H1 (cell line): ENCODE measurements at regions of chr1 and their contacts with region 1.

Region 1: GRCh38 chr1:1337793-1338147 is 6.7 kb downstream of the TAS1R3 start:
- DNase-seq: peak in 1 of 2 experiments; percentile 87
- H3K4me3 ChIP-seq: no peak overlapping the region
- H3K27ac ChIP-seq: no peak overlapping the region
- H3K4me1 ChIP-seq: no peaks in the 10 kb centered on the region; a peak in 1 of 7 replicates
- H3K27me3 ChIP-seq: no peaks in the 10 kb centered on the region; a peak in 1 of 7 replicates
- CTCF ChIP-seq: no peak
- EP300 ChIP-seq: no peak
- POLR2A ChIP-seq: no peak
- RAD21 ChIP-seq: no peak

Region 2: DNA sequence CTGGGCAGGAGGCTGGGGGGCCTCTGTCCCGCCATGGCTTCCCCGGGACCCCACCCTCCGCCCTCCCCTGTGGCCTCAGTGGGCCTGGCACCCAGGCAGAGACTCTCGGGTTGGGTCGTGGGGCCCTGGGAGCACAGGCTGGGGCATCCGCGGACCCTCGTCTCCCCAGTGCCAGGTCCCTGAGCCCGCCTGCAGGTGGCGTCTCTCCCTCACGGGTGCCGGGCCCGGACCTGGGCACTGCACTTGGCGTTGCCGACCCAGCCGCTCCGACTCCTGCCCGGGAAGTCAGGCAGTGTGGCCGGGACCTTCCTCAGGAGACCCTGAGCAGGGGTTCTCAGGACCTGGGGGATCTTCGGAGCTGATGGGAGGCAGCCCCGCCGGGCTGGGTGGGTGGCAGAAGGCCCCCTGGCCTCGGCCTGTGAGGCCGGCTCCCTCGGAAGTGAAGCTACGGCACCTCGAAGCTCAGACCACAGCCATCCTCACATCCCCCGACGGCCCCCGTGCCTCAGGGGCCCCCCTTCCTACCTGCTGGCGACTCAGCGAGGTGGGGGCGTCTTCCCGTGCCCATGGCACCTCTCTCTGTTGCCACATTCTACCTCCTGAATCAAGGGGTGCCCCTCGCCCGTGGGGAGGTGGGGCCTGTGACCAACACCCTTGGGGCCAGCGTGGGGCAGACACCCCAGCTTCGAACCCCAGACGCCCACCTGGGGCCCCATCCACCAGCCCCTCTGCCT is 215.5 kb before region 1 on chr1:
- CTCF ChIA-PET with region 1: no interaction called
- POLR2A ChIA-PET with region 1: no interaction called
- DNase-seq: peak; percentile 47 to 94
- H3K4me3 ChIP-seq: no peak overlapping the region
- H3K27ac ChIP-seq: no peak overlapping the region
- H3K4me1 ChIP-seq: peaks cover 0 to 3% (median 2%) of the 10 kb centered on the region in 4 experiments; a peak in 4 of 7 replicates
- H3K27me3 ChIP-seq: peaks cover 2 to 16% (median 13%) of the 10 kb centered on the region in 4 experiments; a peak in 6 of 7 replicates
- CTCF ChIP-seq: peak in 2 of 3 experiments; percentile 91 to 95; a peak in 3 of 4 replicates
- EP300 ChIP-seq: no peak
- POLR2A ChIP-seq: no peak
- RAD21 ChIP-seq: peak; percentile 97 to 98

Region 3: DNA sequence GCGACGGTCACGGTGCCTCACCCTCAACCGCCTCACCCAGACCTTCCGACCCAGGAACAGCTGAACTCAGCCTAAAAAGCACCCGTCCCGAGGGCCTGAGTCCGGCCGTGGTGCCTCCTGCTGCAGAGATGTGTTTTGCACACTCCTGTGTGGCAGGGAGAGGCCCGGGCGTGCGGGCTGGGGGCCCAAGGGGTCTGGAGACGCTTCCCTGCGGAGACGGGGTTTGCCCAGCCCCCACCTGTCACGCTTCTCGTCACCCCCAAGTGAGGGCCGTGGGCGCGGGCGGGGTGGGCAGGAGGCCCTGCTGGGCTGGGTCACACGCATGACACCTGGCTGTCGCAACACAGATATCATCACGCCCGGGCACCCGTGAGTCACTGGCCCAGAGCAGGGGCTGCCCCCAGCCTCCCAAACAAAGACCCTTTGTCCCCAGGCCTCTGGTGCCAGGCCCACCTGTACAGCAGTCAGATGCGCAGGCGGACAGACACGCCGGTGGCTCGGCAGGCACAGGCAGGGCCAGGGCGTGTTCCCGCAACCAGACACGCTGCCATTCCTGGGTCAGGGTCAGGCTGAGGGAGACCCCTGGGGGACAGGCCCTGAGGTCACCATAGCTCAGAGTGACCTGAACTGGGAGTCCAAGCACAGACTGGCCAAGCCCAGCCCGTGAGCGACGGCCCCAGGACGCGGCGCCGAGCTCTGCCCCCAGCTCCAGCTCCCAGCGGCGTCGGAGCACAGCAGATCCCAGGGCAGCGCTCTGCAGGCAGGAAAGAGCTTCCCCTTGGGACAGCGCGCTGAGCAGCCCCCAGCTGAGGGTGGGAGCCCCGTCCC is 99.7 kb before region 1 on chr1:
- CTCF ChIA-PET with region 1: no interaction called
- POLR2A ChIA-PET with region 1: no interaction called
- DNase-seq: no peak
- H3K4me3 ChIP-seq: no peak overlapping the region
- H3K27ac ChIP-seq: no peak overlapping the region
- H3K4me1 ChIP-seq: peaks cover 0 to 6% (median 3%) of the 10 kb centered on the region in 4 experiments; a peak in 2 of 7 replicates
- H3K27me3 ChIP-seq: no peaks in the 10 kb centered on the region; a peak in 2 of 7 replicates
- CTCF ChIP-seq: no peak
- EP300 ChIP-seq: no peak
- POLR2A ChIP-seq: no peak
- RAD21 ChIP-seq: no peak

Region 4: DNA sequence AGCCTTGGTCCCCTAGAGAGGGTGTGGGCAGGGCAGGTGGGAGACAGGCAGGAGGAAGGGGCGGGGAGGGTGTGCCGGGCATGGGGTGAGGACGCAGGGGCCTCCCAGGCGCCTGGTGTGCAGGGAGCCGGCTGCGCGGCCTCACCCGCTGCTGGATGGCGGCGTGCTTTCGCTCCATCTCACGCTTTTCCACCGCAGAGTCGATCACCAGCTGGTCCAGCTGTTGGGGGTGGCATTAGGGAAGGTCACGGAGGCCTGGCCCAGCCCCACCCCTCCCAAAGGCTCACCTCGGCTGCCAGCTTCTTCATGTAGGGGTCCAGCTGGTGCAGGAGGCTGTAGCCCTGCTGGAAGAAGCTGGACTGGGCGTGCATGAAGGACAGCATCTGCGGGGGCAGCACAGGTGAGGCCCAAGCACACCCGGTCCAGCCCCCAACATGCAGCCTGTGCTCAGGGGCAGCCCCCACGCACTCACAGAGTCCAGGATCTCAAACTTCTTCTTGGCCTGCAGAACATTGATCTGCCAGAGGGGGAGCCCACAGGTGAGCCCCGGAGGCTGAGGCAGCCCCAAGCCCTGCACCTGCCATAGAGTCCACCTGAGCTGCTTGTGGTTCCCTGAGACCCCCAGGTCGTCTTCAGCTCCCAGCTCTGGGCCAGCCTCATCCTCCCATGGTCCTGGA is 37.9 kb before region 1 on chr1:
- CTCF ChIA-PET with region 1: interaction called, 13 read pairs
- POLR2A ChIA-PET with region 1: interaction called, 3 read pairs
- DNase-seq: no peak
- H3K4me3 ChIP-seq: no peak overlapping the region
- H3K27ac ChIP-seq: no peak overlapping the region
- H3K4me1 ChIP-seq: peaks cover 0 to 10% (median 6%) of the 10 kb centered on the region in 4 experiments; a peak in 5 of 7 replicates
- H3K27me3 ChIP-seq: no peaks in the 10 kb centered on the region
- CTCF ChIP-seq: peak in 2 of 3 experiments; percentile 56 to 72; a peak in 3 of 4 replicates
- EP300 ChIP-seq: no peak
- POLR2A ChIP-seq: no peak
- RAD21 ChIP-seq: peak; percentile 14 to 34; a peak in 2 of 4 replicates

Region 5: DNA sequence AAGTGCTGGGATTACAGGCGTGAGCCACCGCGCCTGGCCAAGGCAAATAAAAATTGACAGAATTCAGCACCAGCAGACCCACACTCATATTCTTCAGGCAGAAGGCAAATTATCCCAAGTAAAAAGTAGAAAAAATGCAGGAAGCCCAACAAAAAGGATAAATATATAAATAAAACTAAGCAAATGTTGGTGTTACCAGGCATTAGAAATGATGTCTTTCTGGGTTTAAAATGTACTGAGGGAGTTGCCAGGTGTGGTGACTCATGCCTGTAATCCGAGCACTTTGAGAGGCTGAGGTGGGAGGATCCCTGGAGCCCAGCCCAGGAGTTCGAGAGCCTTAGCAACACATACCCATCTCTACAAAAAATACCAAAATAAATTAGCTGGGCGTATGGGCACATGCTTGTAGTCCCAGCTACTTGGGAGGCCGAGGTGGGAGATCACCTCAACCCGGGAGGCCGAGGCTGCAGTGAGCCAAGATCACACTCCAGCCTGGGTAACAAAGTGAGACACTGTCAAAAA is 19.6 kb before region 1 on chr1:
- CTCF ChIA-PET with region 1: interaction called, 3 read pairs
- POLR2A ChIA-PET with region 1: interaction called, 134 read pairs
- DNase-seq: no peak
- H3K4me3 ChIP-seq: no peak overlapping the region
- H3K27ac ChIP-seq: no peak overlapping the region
- H3K4me1 ChIP-seq: peaks cover 0 to 15% (median 4%) of the 10 kb centered on the region in 4 experiments; a peak in 6 of 7 replicates
- H3K27me3 ChIP-seq: no peaks in the 10 kb centered on the region
- CTCF ChIP-seq: no peak
- EP300 ChIP-seq: no peak
- POLR2A ChIP-seq: no peak
- RAD21 ChIP-seq: no peak

Region 6: GRCh38 chr1:1324521-1325287 is 13.1 kb before region 1 on chr1 and contains the starts of genes CPTP and INTS11:
- CTCF ChIA-PET with region 1: interaction called, 3 read pairs
- POLR2A ChIA-PET with region 1: interaction called, 27 read pairs
- DNase-seq: peak in 1 of 2 experiments; percentile 94
- H3K4me3 ChIP-seq: peak within 1 kb of the TSS; percentile 60 to 100 (median 83)
- H3K27ac ChIP-seq: peak within 1 kb of the TSS; percentile 55; the same call in 1 of the 2 replicates
- H3K4me1 ChIP-seq: peaks cover 0 to 13% (median 3%) of the 10 kb centered on the region in 4 experiments; a peak in 5 of 7 replicates
- H3K27me3 ChIP-seq: no peaks in the 10 kb centered on the region; a peak in 1 of 7 replicates
- CTCF ChIP-seq: no peak
- EP300 ChIP-seq: no peak
- POLR2A ChIP-seq: peak in 1 of 2 experiments; percentile 74; a peak in 2 of 3 replicates
- RAD21 ChIP-seq: no peak
- total RNA-seq, gene CPTP: 10.6 and 13.3 TPM in 2 replicates
- total RNA-seq, gene INTS11: 113 and 116 TPM in 2 replicates

Region 7: DNA sequence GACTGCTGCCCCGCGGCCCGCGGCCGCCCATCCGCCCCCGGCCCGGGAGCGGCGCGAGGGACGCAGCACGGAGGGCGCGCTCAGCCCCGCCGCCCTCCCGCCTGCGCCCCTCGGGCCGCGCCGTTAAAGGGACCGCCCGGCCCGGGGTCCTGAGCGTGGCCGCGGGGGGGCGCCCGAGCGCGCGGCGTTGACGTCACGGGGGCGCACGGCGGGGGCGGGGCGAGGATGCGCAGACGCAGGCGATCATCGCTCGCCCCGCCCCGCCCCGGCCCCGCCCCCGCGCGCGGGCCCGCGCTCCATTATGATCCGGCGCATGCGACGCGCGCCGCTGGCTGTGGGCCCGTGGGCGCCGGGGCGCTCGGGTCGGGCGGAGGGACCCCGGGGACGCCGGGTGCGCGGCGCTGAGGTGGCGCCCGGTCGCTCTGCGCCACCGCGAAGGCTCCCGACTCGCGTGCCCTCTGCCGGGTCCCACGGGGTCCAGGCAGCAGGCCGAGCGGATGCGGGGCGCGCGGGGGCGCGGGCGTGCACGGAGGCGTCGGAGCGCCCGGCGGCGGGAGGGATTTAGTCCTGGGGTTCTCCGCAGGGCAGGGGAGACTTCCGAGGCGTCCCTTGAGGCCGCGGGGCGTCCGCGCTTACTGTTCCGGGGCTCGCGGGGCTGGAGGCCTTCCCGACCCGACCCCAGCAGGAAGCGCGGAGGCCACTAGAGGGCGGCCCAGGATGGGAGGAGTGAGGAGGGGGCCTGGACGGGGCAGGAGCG is 11.7 kb after region 1 on chr1 and contains the start of gene DVL1:
- CTCF ChIA-PET with region 1: interaction called, 6 read pairs
- POLR2A ChIA-PET with region 1: interaction called, 12 read pairs
- DNase-seq: peak in 1 of 2 experiments; percentile 85
- H3K4me3 ChIP-seq: peak within 1 kb of the TSS; percentile 60 to 91 (median 79)
- H3K27ac ChIP-seq: peak within 1 kb of the TSS; percentile 83; the same call in 1 of the 2 replicates
- H3K4me1 ChIP-seq: peaks cover 0 to 45% (median 33%) of the 10 kb centered on the region in 4 experiments; a peak in 6 of 7 replicates
- H3K27me3 ChIP-seq: peaks cover 0 to 6% (median 4%) of the 10 kb centered on the region in 4 experiments; a peak in 5 of 7 replicates
- CTCF ChIP-seq: peak in 2 of 3 experiments; percentile 33 to 56; a peak in 3 of 4 replicates
- EP300 ChIP-seq: no peak
- POLR2A ChIP-seq: no peak
- RAD21 ChIP-seq: peak; percentile 45 to 49; a peak in 3 of 4 replicates
- total RNA-seq, gene DVL1: 56.0 and 58.9 TPM in 2 replicates